ENCODE measurements at regions of chr7 and their contacts with region 1.

Region 1: DNA sequence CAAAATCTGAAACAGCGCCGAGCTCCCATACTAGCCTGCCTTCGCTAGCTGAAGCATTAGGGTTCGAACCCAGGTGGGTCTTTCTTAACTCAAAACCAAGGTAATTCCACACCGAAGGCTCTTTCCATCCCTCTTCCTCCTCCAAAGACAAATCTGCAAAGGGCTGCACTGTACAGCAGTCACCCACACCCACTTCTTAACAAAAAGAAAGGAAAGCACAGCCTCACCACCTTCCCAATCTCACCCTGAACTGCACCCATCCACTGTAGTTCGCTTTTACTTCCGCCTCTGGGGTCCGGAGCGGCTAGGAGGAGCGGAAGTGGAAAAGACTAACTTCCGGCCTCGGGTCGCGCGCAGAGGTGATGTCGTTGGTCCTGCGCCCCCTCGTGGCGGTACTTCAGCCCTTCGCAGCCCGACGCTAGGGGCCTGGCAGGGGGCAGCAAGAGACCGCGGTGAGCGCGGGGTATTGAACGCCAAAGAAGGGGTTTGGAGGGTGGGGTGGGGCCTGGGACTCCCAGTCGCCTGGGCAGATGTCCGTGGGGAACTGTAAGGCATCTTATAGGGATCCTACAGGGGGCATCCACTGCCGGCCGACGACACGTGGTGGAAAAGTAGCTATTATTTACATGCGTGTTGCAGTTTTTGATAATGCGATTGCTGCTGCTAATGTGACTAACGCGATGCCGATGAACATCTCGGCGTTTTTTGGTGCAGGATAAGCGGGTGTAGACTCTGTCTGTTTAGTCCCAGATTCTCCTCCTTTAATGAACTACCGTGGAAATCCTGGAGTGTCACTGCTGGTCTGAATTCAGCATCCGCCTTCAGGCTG is at the start of gene MTERF1:
- DNase-seq: peak; percentile 84 to 94 (median 90)
- H3K4me3 ChIP-seq: peak within 1 kb of the TSS; percentile 61 to 98 (median 86)
- H3K27ac ChIP-seq: peak within 1 kb of the TSS in 52 of 59 donors; percentile 2 to 87 (median 69)
- H3K27me3 ChIP-seq: no peaks in the 10 kb centered on the region
- CTCF ChIP-seq: peak; percentile 89 to 100 (median 98)
- total RNA-seq, gene MTERF1: 12.7 to 31.4 (median 20.8) TPM

Region 2: DNA sequence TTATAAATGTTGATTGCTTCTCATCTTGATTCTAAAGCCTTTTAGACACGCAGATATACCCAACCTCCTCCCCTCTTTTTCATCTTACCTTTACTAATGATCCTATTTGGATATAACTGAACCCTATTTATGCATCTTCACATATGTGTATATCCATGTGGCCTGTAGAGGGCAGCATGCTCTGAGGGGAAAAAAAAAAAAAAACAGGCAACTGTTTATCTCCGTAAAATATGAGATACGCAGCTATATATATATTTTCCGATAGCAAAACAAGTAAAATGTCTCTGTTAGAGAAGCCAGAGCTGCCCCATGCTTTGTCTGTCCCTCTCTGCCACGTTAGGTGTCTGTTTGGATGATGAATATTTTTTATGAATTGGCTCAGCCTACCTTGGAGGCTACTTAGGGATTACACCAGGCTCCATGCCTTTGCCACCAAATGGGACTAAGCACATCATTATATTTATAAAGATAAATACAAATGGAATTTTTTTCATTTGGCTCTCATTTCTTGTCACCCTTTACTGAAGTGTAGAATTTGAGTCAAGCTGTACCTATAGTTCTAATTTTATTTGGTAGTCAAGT is 791.2 kb before region 1 on chr7:
- intact Hi-C with region 1: loop called in 1 of 2 experiments (anchors 5 kb)
- DNase-seq: no peak
- H3K4me3 ChIP-seq: peak overlapping the region in 55 of 59 donors; percentile 5 to 60 (median 42)
- H3K27ac ChIP-seq: peak overlapping the region in 7 of 59 donors; percentile 9 to 63 (median 36)
- H3K27me3 ChIP-seq: no peaks in the 10 kb centered on the region
- CTCF ChIP-seq: peak; percentile 65 to 87 (median 79)

Region 3: DNA sequence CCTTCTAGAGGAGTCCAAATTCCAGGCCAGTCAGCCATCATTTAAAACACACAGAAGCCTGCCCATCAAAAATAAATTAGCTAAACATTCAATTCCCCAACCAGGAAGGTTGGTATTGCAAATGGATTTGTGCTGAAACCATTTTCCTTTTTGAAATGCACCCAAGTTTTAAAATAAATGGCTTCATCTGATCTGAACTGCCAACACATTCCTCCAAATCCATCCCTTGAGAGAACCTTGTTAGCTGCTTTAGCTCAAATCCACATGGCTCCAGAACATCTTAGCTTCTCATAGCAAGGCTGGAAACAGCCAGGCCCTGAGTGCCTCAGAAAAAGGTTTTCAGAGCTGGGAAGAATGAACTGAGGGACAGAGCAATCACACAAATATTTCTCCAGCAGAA is 310.1 kb before region 1 on chr7:
- intact Hi-C with region 1: no loop called
- DNase-seq: no peak
- H3K4me3 ChIP-seq: no peak overlapping the region
- H3K27ac ChIP-seq: no peak overlapping the region
- H3K27me3 ChIP-seq: no peaks in the 10 kb centered on the region
- CTCF ChIP-seq: no peak

Region 4: DNA sequence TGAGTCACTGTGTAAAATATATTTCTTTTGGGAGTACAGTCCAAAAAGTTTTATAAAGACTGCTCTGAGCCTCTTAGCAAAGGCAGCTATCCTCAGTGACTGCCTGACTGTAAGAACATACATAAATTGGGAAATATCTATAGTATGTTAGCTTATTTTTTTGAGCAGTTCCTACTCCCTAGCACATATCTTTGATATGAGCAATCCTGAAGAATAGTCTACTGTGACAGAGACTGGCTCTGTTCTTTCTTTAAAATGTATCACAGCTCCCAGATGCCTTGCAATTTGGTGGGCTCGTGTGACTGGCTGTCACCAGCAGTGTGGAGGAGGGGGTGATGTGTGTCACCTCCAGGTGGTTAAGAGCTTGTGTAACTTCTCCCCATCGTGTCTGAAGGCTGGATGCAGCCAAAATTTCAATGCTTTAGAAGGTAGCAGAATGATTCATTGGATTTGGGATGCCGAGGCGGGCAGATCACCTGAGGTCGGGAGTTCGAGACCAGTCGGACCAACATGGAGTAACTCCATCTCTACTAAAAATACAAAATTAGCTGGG is 48.1 kb before region 1 on chr7:
- intact Hi-C with region 1: loop called in 1 of 2 experiments (anchors 5 kb)
- DNase-seq: no peak
- H3K4me3 ChIP-seq: no peak overlapping the region
- H3K27ac ChIP-seq: no peak overlapping the region
- H3K27me3 ChIP-seq: no peaks in the 10 kb centered on the region
- CTCF ChIP-seq: no peak

Region 5: DNA sequence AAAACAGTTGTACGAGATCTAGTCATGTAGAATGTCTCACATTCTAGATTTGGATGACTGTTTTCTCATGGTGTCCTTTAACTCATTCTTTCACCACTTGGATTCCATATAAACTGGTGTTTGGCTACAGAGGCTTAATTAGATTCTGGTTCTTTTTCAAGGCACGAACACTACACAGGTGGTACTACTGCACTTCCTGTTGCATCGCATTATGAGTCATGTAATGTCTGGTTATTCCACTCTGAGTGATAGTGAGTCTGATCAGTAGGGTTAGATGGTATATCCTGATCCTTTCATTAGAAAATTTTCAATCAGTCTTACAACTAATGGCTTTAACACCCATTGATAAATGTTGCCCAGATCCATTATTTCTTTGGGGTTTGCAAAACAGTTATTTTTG is 48.8 kb after region 1 on chr7:
- intact Hi-C with region 1: no loop called
- DNase-seq: no peak
- H3K4me3 ChIP-seq: no peak overlapping the region
- H3K27ac ChIP-seq: no peak overlapping the region
- H3K27me3 ChIP-seq: no peaks in the 10 kb centered on the region
- CTCF ChIP-seq: no peak

Region 6: DNA sequence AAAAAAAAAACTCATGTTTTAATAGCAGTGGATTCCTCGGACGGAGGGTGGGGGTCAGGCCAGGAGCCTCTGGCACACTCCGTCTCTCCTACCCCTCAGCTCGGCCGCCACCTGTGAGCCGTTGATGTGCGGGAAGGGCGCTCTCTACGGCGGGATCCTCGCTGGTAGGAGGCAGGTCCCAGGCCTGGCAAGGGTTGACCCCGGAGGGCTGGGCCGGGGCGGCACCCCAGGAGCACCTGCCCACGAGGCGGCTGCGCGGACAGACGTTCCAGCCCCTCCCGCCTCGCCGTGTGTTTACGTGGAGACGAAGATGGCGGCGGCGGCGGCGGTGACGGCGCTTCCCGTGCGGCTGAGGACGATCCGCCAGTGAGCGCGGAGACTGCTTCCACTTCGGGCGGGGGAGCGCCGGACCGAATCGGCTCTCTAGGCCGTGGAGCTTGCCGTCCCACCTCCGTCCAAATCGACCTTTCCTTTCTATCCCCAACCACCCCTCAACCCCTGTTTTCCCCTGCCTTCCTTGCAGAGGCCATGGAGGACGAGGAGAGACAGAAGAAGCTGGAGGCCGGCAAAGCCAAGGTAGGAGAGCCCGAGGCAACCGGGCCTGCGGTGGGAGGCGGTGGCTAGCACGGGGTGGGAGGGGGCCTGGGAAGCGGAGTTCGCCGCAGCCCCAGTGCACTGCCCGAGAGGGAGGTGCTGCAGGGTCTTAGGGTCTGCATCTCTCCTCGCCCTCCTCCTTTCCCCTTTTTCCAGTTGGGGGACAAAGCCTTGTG is 60.1 kb after region 1 on chr7 and contains the start of gene AKAP9:
- intact Hi-C with region 1: loop called in 1 of 2 experiments (anchors 5 kb)
- DNase-seq: peak; percentile 70 to 94 (median 84)
- H3K4me3 ChIP-seq: peak within 1 kb of the TSS; percentile 54 to 98 (median 87)
- H3K27ac ChIP-seq: peak within 1 kb of the TSS; percentile 77 to 99 (median 94)
- H3K27me3 ChIP-seq: no peaks in the 10 kb centered on the region
- CTCF ChIP-seq: peak in 15 of 56 donors; percentile 5 to 35 (median 11)
- total RNA-seq, gene AKAP9: 64.7 to 107 (median 85.5) TPM

Region 7: GRCh38 chr7:92134271-92135051 is 253.8 kb after region 1 on chr7 and contains the start of gene CYP51A1:
- intact Hi-C with region 1: loop called (anchors 2 kb)
- DNase-seq: peak; percentile 88 to 97 (median 94)
- H3K4me3 ChIP-seq: peak within 1 kb of the TSS; percentile 66 to 100 (median 95)
- H3K27ac ChIP-seq: peak within 1 kb of the TSS; percentile 85 to 100 (median 97)
- H3K27me3 ChIP-seq: no peaks in the 10 kb centered on the region
- CTCF ChIP-seq: peak in 33 of 56 donors; percentile 1 to 51 (median 25)
- total RNA-seq, gene CYP51A1: 49.1 to 122 (median 85.7) TPM

Region 8: GRCh38 chr7:92178927-92179924 is 298.6 kb after region 1 on chr7 and contains the start of gene LRRD1:
- intact Hi-C with region 1: loop called in 1 of 2 experiments (anchors 2 kb)
- DNase-seq: peak; percentile 79 to 94 (median 87)
- H3K4me3 ChIP-seq: peak within 1 kb of the TSS; percentile 52 to 88 (median 73)
- H3K27ac ChIP-seq: peak within 1 kb of the TSS; percentile 13 to 98 (median 90)
- H3K27me3 ChIP-seq: no peaks in the 10 kb centered on the region
- CTCF ChIP-seq: peak; percentile 86 to 100 (median 98)
- total RNA-seq, gene LRRD1: 0.21 to 4.2 (median 0.92) TPM in 117 of 120 experiments, not detected in the others

Region 9: DNA sequence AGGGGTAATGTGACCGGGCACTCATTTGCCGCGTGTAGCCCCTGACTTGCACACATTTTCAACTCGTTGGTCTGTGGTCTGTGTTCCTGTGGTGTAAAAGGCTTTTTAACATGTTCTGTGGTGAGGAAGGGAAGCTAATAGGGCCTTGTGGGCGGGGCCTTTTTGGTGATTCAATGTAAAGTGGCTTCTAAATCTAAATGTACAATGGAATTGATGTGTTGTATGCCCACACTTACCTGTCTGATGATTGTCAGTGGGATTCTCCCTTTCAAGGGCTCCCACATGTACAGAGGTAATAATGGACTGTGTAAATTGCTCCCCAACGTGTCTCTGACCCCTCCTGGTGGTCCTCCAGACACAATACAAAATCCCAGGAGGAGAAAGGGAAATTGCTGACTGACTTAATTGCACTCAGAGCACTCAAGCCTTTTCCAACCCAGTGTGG is 523.6 kb after region 1 on chr7:
- intact Hi-C with region 1: no loop called
- DNase-seq: no peak
- H3K4me3 ChIP-seq: no peak overlapping the region
- H3K27ac ChIP-seq: peak overlapping the region in 45 of 59 donors; percentile 1 to 71 (median 41)
- H3K27me3 ChIP-seq: no peaks in the 10 kb centered on the region
- CTCF ChIP-seq: peak in 14 of 56 donors; percentile 8 to 49 (median 20)

Region 10: GRCh38 chr7:92447345-92448204 is 566.9 kb after region 1 on chr7 and contains the start of gene GATAD1:
- intact Hi-C with region 1: loop called (anchors 1 to 5 kb)
- DNase-seq: peak; percentile 80 to 95 (median 93)
- H3K4me3 ChIP-seq: peak within 1 kb of the TSS; percentile 59 to 100 (median 96)
- H3K27ac ChIP-seq: peak within 1 kb of the TSS; percentile 29 to 98 (median 91)
- H3K27me3 ChIP-seq: no peaks in the 10 kb centered on the region
- CTCF ChIP-seq: peak in 54 of 56 donors; percentile 92 to 99 (median 98)
- total RNA-seq, gene GATAD1: 31.7 to 95.3 (median 53.2) TPM

Measured in dorsolateral prefrontal cortex (tissue), 120 donors.